Gastrocnemius medialis (tissue), 4 donors: ENCODE measurements at regions of chr10 and their contacts with region 1.

Region 1: DNA sequence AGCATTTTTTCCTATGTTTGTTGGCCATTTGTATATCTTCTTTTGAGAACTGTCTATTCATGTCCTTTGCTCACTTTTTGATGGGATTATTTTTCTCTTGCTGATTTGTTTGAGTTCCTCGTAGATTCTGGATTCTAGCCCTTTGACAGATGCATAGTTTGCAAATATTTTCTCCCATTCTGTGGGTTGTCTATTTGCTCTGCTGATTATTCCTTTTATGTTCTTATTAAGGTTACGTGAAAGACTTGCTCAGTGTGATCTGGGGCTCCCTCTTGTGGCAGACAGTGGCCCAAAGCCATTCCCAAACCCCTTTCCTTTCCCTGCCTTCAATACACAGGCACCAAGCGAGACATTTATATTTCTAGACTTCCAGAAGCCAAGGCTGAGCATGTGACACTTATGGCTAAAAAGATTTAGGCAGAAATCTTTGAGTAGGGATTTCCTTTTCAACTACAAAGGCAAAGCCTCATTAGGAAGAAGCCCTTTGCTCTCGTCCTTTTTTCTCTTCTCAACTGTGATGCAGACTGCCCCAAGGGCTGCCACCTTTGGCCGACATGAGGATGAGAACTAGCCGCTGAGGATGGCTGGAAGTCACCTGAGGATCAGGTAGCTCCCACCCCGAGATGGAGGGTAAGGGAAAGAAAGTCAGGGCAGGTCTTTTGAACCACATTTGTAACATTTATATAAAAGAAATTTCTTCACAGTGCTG is 23.6 kb downstream of the ST8SIA6 start:
- DNase-seq: peak in 1 of 2 donors; percentile 25
- ATAC-seq: peak in 1 of 2 donors; percentile 62
- H3K4me3 ChIP-seq: no peak overlapping the region
- H3K27ac ChIP-seq: no peak overlapping the region
- H3K4me1 ChIP-seq: no peaks in the 10 kb centered on the region
- H3K27me3 ChIP-seq: peaks cover 0 to 11% (median 3%) of the 10 kb centered on the region in 3 donors
- CTCF ChIP-seq: peak; percentile 47 to 82 (median 60)
- POLR2A ChIP-seq: no peak

Region 2: GRCh38 chr10:16828114-16828568 is 602.7 kb before region 1 on chr10:
- in situ Hi-C with region 1: loop called in 2 of 4 experiments (anchors 25 kb)
- intact Hi-C with region 1: loop called (anchors 5 kb)
- DNase-seq: peak in 1 of 2 donors; percentile 20
- ATAC-seq: peak; percentile 74 to 78
- H3K4me3 ChIP-seq: no peak overlapping the region
- H3K27ac ChIP-seq: peak overlapping the region in 1 of 4 donors; percentile 5
- H3K4me1 ChIP-seq: peaks cover 0 to 6% of the 10 kb centered on the region in 2 donors
- H3K27me3 ChIP-seq: no peaks in the 10 kb centered on the region
- CTCF ChIP-seq: peak; percentile 21 to 65 (median 61)
- POLR2A ChIP-seq: no peak

Region 3: DNA sequence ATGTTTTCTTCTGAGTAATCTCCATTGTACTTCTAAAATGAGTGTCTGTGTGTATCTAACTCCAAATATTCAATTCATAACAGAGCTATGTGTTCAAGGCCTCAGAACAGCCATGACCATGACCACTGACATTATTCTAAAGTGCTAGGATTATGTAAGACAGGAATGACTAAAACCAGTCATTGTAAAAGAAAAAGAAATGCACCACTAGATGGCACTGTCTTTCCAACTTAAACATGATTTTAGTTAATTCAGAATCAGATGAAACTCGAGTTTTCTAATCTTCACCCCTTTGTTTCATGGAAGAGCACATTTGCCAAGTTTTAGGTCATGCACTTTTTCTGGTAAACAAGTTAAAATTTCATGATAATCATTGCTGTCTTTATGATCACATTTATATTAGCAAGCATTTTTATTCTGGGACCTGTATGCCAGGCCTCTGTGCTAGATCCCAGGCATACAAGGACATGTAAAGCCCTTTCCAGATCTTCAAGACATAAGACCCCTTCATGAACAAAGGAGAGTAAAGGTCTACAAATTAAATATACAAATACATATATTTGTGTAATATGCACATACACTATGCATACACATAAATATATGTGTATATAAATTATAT is 587.4 kb before region 1 on chr10:
- in situ Hi-C with region 1: loop called (anchors 10 to 25 kb)
- intact Hi-C with region 1: no loop called
- DNase-seq: no peak
- ATAC-seq: peak in 1 of 2 donors; percentile 68
- H3K4me3 ChIP-seq: no peak overlapping the region
- H3K27ac ChIP-seq: no peak overlapping the region
- H3K4me1 ChIP-seq: no peaks in the 10 kb centered on the region
- H3K27me3 ChIP-seq: no peaks in the 10 kb centered on the region
- CTCF ChIP-seq: peak in 4 of 5 experiments; percentile 41 to 69 (median 57)
- POLR2A ChIP-seq: no peak

Region 4: GRCh38 chr10:17115683-17116082 is 315.1 kb before region 1 on chr10:
- in situ Hi-C with region 1: no loop called
- intact Hi-C with region 1: no loop called
- DNase-seq: no peak
- ATAC-seq: no peak
- H3K4me3 ChIP-seq: no peak overlapping the region
- H3K27ac ChIP-seq: no peak overlapping the region
- H3K4me1 ChIP-seq: no peaks in the 10 kb centered on the region
- H3K27me3 ChIP-seq: no peaks in the 10 kb centered on the region
- CTCF ChIP-seq: no peak
- POLR2A ChIP-seq: no peak

Region 5: DNA sequence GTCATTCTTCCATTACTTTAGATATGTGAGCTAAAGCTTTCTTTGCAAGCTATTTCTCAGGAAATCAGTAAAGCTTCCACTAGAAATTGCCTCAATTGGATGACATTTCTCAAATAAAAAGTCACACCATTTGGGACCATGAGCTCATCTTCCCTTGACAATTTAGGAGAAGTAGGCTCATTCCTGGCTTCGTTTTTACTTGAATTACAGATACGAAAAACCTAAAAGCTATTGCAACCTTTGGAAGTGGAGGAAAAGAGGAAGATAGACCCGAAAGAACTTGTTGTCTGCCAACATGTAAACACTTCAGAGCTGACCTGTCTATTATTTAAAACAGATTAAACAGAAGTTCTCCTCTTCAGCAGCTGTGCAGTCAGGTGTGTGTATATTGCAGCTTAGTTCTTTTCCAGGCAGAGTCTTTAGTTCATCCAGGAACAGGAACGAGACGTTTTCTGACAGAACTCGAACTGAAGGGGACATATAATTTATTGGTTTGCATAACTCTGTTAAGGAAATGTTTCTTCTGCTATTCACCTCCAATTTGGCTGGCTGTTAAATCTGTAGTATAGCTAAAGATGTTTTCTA is 66.7 kb after region 1 on chr10:
- in situ Hi-C with region 1: no loop called
- intact Hi-C with region 1: no loop called
- DNase-seq: no peak
- ATAC-seq: no peak
- H3K4me3 ChIP-seq: no peak overlapping the region
- H3K27ac ChIP-seq: no peak overlapping the region
- H3K4me1 ChIP-seq: no peaks in the 10 kb centered on the region
- H3K27me3 ChIP-seq: no peaks in the 10 kb centered on the region
- CTCF ChIP-seq: no peak
- POLR2A ChIP-seq: no peak

Region 6: GRCh38 chr10:17633353-17633752 is 202.6 kb after region 1 on chr10:
- in situ Hi-C with region 1: no loop called
- intact Hi-C with region 1: no loop called
- DNase-seq: no peak
- ATAC-seq: no peak
- H3K4me3 ChIP-seq: no peak overlapping the region
- H3K27ac ChIP-seq: no peak overlapping the region
- H3K4me1 ChIP-seq: no peaks in the 10 kb centered on the region
- H3K27me3 ChIP-seq: no peaks in the 10 kb centered on the region
- CTCF ChIP-seq: no peak
- POLR2A ChIP-seq: no peak